HepG2 (cell line): ENCODE measurements at regions of chr15 and their contacts with region 1.

Region 1: DNA sequence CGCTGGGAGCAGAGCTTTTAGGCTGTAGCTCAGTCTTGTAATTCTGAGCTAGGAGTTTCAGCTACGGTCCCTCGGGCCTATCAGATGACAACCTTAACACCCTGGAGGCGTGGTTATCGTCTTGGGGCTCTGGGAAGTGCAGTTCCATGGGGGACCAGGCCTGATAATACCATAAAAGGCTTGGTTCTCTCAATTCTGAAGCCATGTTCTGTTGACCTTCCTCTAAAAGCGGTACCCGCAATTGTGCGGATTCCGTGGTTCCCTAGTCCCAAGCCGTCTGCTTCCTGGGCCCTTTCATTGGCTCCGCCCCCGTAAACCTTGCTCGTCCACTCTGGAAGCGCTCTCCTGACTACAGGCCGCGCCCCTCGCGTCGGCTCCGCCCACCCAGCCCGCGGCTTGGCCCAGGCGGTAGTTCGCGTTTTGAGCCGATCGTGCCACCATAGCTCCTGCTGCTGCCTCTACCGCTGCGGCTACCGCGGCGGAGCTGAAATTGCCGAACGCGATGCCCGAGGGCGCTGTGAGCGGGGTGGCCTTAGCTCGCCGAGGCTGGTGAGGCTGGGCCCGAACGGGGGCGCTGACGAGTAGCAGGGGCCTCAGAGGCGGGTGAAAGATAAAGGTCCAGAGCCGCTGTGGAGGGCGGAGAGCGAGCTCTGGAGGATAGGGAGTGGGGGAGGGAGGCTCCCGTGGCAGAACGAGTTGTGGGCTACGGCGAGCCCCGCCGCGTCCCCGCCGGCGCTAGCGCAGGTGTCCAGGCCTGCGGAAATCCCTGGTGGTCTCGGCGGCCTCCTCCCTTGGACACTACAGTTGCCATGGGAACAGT is at the start of gene MAPKBP1:
- DNase-seq: peak; percentile 95
- ATAC-seq: peak; percentile 90
- H3K4me3 ChIP-seq: peak within 1 kb of the TSS; percentile 63 to 91 (median 86)
- H3K27ac ChIP-seq: peak within 1 kb of the TSS; percentile 76
- H3K4me1 ChIP-seq: peaks cover 56% of the 10 kb centered on the region
- H3K27me3 ChIP-seq: no peaks in the 10 kb centered on the region; a peak in 1 of 5 replicates
- CTCF ChIP-seq: peak; percentile 99
- EP300 ChIP-seq: peak; percentile 37 to 40; a peak in 3 of 4 replicates
- POLR2A ChIP-seq: peak in 1 of 2 experiments; percentile 63
- RAD21 ChIP-seq: peak; percentile 94
- total RNA-seq, gene MAPKBP1: 3.9 and 7.3 TPM in 2 replicates

Region 2: DNA sequence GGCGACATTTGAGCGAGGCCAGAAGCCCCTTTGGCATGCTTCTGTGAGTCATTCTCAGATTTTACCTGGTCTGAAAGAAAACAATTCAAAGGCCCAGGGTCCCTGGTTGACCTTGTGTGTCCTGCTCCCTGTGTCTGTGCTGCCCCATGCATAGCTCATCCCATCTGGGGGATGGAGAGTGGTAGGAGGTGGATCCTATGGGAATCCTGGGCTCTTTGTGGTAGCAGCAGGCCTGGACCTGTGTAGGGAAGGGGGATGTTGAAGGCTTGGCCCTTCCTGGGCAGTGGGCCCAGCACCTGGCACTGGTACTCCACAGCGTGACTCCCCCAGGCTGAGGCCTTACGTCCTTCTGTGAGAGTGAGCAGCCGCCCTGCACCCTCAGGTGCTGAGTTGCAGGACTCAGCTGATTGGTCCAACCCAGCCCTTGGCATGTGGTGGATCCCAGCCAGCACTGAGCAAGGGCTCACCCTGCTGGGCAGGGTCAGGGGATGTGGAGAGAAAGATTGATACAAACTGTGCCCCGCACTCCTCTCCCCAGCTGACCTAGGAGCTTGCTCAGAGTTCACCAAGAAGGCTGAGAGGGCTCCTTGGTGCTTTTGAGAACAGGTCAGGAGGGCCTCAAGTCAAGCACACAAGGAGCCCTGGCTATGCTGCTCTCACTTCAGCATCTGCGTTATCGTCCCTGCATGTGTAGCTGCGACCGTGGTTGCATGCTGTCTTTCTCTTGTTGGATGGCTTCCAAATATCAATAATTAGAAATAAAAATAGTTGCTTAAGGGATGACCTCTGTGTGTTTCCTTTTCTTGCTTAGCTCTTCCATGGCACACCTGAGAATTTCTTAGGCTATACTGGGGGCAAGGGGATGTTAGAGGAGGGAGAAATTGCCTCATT is 32.3 kb after region 1 on chr15:
- CTCF ChIA-PET with region 1: interaction called, 98 read pairs
- POLR2A ChIA-PET with region 1: interaction called, 20 read pairs
- in situ Hi-C with region 1: loop called (anchors 5 kb)
- intact Hi-C with region 1: loop called (anchors 1 kb)
- DNase-seq: peak; percentile 34
- ATAC-seq: peak; percentile 83
- H3K4me3 ChIP-seq: no peak overlapping the region
- H3K27ac ChIP-seq: no peak overlapping the region
- H3K4me1 ChIP-seq: no peaks in the 10 kb centered on the region
- H3K27me3 ChIP-seq: no peaks in the 10 kb centered on the region
- CTCF ChIP-seq: peak; percentile 69
- EP300 ChIP-seq: no peak
- POLR2A ChIP-seq: no peak
- RAD21 ChIP-seq: peak; percentile 71

Region 3: GRCh38 chr15:41811432-41812195 is 37.3 kb after region 1 on chr15:
- CTCF ChIA-PET with region 1: interaction called, 98 read pairs
- POLR2A ChIA-PET with region 1: interaction called, 20 read pairs
- in situ Hi-C with region 1: loop called (anchors 5 kb)
- intact Hi-C with region 1: loop called (anchors 1 kb)
- DNase-seq: peak; percentile 69
- ATAC-seq: peak; percentile 93
- H3K4me3 ChIP-seq: no peak overlapping the region
- H3K27ac ChIP-seq: no peak overlapping the region
- H3K4me1 ChIP-seq: no peaks in the 10 kb centered on the region
- H3K27me3 ChIP-seq: no peaks in the 10 kb centered on the region
- CTCF ChIP-seq: peak; percentile 88
- EP300 ChIP-seq: no peak
- POLR2A ChIP-seq: no peak
- RAD21 ChIP-seq: peak; percentile 95

Region 4: GRCh38 chr15:41904541-41905005 is 130.3 kb after region 1 on chr15:
- CTCF ChIA-PET with region 1: no interaction called
- POLR2A ChIA-PET with region 1: interaction called, 4 read pairs
- in situ Hi-C with region 1: no loop called
- intact Hi-C with region 1: loop called (anchors 2 kb)
- DNase-seq: peak; percentile 64
- ATAC-seq: peak; percentile 94
- H3K4me3 ChIP-seq: no peak overlapping the region
- H3K27ac ChIP-seq: no peak overlapping the region
- H3K4me1 ChIP-seq: no peaks in the 10 kb centered on the region
- H3K27me3 ChIP-seq: no peaks in the 10 kb centered on the region
- CTCF ChIP-seq: peak; percentile 94
- EP300 ChIP-seq: no peak
- POLR2A ChIP-seq: no peak
- RAD21 ChIP-seq: peak; percentile 85